ENCODE measurements at regions of chr20 and their contacts with region 1.

Region 1: DNA sequence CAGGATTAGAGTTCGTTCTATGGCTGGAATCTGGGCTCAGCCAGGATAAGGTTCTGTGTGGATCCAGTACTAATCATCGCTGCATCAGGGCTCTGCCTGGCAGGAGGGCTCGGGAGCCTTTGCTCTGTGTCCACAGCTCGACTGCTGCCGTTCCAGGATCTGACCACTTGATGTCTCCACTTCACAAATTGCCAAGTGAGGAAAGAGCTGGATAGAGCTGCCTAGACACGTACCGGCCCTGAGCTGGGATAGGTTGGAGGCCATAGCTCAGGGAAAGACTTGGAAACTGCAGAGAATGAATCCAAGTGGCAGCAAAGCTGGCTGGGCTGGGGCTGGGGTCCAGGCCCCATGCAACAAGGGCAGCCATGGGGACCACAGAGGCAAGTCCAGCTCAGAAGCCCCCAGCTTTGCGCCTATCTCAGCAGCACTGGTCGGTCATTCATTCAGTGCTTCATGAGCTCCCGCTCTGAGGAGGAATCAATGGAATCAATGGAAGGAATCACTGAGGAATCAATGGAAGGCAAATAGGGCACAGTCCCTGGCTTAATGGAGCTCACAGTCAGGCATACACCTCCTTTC is 38.0 kb upstream of the TOP1 start:
- DNase-seq: peak; percentile 72 to 81 (median 78)
- H3K4me3 ChIP-seq: peak overlapping the region in 4 of 7 experiments; percentile 27 to 48 (median 38)
- H3K27ac ChIP-seq: peak overlapping the region in 1 of 2 experiments; percentile 45
- H3K4me1 ChIP-seq: peaks cover 15 to 33% (median 24%) of the 10 kb centered on the region in 4 experiments
- H3K27me3 ChIP-seq: no peaks in the 10 kb centered on the region

Region 2: GRCh38 chr20:40938020-40938419 is 52.6 kb before region 1 on chr20:
- CTCF ChIA-PET with region 1: no interaction called
- POLR2A ChIA-PET with region 1: no interaction called
- DNase-seq: no peak
- H3K4me3 ChIP-seq: no peak overlapping the region
- H3K27ac ChIP-seq: no peak overlapping the region
- H3K4me1 ChIP-seq: peaks cover 0 to 14% (median 8%) of the 10 kb centered on the region in 4 experiments
- H3K27me3 ChIP-seq: no peaks in the 10 kb centered on the region

Region 3: DNA sequence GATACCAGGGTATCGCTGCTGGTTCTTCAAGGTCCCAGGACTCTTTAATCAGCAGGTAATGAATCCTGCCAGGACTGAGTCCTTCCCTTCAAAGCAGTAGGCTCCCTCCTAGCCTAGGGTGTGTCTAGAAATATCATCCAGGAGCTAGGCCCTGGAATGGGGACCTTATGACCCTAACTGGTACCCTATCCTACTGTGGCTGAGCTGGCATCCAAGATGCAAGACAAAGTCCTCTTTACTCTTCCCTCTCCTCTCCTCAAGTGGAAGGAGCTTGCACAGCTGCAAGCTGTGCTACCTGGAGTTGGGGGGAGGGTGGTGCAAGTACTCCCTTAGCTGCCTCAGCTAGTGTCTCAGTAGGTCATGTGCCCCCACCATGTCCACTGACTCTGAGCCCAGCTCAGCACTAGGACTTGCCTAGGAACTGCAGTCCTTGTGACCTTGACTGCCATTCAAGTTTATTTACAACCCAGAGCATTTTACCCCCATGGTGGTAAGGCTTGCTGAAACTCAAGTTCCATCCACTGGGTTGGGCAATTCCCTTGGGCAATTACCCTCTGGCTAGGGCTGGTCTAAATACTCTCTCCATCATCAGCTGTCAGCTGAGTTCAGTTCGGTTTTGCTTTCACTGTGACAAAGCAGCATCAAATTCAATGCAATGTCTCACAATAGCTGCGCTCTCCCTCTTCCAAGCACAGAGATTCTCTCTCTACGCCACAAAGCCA is 10.4 kb before region 1 on chr20:
- CTCF ChIA-PET with region 1: interaction called, 36 read pairs
- POLR2A ChIA-PET with region 1: interaction called, 3 read pairs
- DNase-seq: no peak
- H3K4me3 ChIP-seq: no peak overlapping the region
- H3K27ac ChIP-seq: no peak overlapping the region
- H3K4me1 ChIP-seq: no peaks in the 10 kb centered on the region
- H3K27me3 ChIP-seq: peaks cover 0 to 12% (median 0%) of the 10 kb centered on the region in 5 experiments

Region 4: DNA sequence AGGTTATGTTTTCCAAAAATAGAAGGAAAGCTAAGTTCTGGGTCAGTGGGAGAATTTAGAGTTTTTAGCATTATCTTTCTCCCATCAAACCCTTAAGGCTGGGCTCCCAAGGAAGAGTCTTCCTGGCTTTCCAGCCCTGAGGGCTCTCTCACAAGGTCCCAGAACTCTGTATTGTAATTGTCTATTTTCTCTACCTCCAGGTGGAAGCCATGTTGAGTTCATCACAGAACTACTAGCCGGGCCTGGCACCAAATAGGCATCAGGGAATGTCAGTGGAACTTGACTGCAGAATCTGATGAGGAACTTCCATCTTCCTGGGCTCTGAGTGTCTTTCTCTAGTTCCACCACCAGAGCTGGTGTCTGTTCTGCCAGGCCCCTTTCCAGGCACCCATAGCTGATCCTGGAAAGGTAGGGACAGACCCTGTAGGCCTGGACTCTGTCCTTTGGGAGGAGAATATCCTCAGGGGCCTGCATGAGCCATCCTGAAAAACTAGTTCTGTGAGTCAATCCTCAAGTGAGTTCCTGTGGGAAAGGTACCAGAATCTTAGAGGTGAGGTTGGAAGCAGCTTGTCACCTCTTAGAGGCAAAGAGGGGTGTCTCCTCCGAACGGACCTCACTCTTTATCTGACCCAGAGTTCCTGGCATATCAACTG is 26.9 kb after region 1 on chr20:
- CTCF ChIA-PET with region 1: interaction called, 96 read pairs
- POLR2A ChIA-PET with region 1: no interaction called
- DNase-seq: no peak
- H3K4me3 ChIP-seq: no peak overlapping the region
- H3K27ac ChIP-seq: no peak overlapping the region
- H3K4me1 ChIP-seq: peaks cover 3 to 7% (median 6%) of the 10 kb centered on the region in 4 experiments
- H3K27me3 ChIP-seq: no peaks in the 10 kb centered on the region

Region 5: GRCh38 chr20:41047975-41048305 is 57.3 kb after region 1 on chr20:
- CTCF ChIA-PET with region 1: interaction called, 16 read pairs
- POLR2A ChIA-PET with region 1: no interaction called
- DNase-seq: peak; percentile 58 to 75 (median 71)
- H3K4me3 ChIP-seq: peak overlapping the region in 6 of 7 experiments; percentile 0 to 69 (median 34)
- H3K27ac ChIP-seq: peak overlapping the region in 1 of 2 experiments; percentile 46
- H3K4me1 ChIP-seq: peaks cover 35 to 71% (median 53%) of the 10 kb centered on the region in 4 experiments
- H3K27me3 ChIP-seq: no peaks in the 10 kb centered on the region

Region 6: GRCh38 chr20:41072190-41072863 is 81.7 kb after region 1 on chr20:
- CTCF ChIA-PET with region 1: interaction called, 34 read pairs
- POLR2A ChIA-PET with region 1: no interaction called
- DNase-seq: no peak
- H3K4me3 ChIP-seq: peak overlapping the region in 3 of 7 experiments; percentile 23 to 62 (median 37)
- H3K27ac ChIP-seq: peak overlapping the region in 1 of 2 experiments; percentile 54
- H3K4me1 ChIP-seq: peaks cover 16 to 73% (median 40%) of the 10 kb centered on the region in 4 experiments
- H3K27me3 ChIP-seq: no peaks in the 10 kb centered on the region

Region 7: GRCh38 chr20:41086402-41087338 is 96.0 kb after region 1 on chr20:
- CTCF ChIA-PET with region 1: interaction called, 156 read pairs
- POLR2A ChIA-PET with region 1: interaction called, 5 read pairs
- DNase-seq: peak; percentile 80 to 95 (median 92)
- H3K4me3 ChIP-seq: peak overlapping the region in 4 of 7 experiments; percentile 21 to 63 (median 33)
- H3K27ac ChIP-seq: peak overlapping the region; percentile 55 to 79
- H3K4me1 ChIP-seq: peaks cover 16 to 43% (median 24%) of the 10 kb centered on the region in 4 experiments
- H3K27me3 ChIP-seq: no peaks in the 10 kb centered on the region

Measured in common myeloid progenitor, CD34-positive (primary cell).